HepG2 (cell line): ENCODE measurements at regions of chr2 and their contacts with region 1.

Region 1: GRCh38 chr2:86764661-86765307 is 25.9 kb downstream of the CD8A start:
- DNase-seq: peak; percentile 43
- ATAC-seq: peak; percentile 89
- H3K4me3 ChIP-seq: no peak overlapping the region
- H3K27ac ChIP-seq: no peak overlapping the region
- H3K4me1 ChIP-seq: no peaks in the 10 kb centered on the region
- H3K27me3 ChIP-seq: no peaks in the 10 kb centered on the region
- CTCF ChIP-seq: peak; percentile 76
- EP300 ChIP-seq: no peak
- POLR2A ChIP-seq: no peak
- RAD21 ChIP-seq: peak; percentile 72

Region 2: GRCh38 chr2:86518481-86518880 is 246.3 kb before region 1 on chr2:
- CTCF ChIA-PET with region 1: no interaction called
- POLR2A ChIA-PET with region 1: no interaction called
- in situ Hi-C with region 1: no loop called
- intact Hi-C with region 1: loop called (anchors 1 kb)
- DNase-seq: peak; percentile 39
- ATAC-seq: peak; percentile 90
- H3K4me3 ChIP-seq: no peak overlapping the region
- H3K27ac ChIP-seq: no peak overlapping the region
- H3K4me1 ChIP-seq: no peaks in the 10 kb centered on the region
- H3K27me3 ChIP-seq: no peaks in the 10 kb centered on the region
- CTCF ChIP-seq: peak; percentile 74
- EP300 ChIP-seq: no peak
- POLR2A ChIP-seq: no peak
- RAD21 ChIP-seq: peak; percentile 70

Region 3: DNA sequence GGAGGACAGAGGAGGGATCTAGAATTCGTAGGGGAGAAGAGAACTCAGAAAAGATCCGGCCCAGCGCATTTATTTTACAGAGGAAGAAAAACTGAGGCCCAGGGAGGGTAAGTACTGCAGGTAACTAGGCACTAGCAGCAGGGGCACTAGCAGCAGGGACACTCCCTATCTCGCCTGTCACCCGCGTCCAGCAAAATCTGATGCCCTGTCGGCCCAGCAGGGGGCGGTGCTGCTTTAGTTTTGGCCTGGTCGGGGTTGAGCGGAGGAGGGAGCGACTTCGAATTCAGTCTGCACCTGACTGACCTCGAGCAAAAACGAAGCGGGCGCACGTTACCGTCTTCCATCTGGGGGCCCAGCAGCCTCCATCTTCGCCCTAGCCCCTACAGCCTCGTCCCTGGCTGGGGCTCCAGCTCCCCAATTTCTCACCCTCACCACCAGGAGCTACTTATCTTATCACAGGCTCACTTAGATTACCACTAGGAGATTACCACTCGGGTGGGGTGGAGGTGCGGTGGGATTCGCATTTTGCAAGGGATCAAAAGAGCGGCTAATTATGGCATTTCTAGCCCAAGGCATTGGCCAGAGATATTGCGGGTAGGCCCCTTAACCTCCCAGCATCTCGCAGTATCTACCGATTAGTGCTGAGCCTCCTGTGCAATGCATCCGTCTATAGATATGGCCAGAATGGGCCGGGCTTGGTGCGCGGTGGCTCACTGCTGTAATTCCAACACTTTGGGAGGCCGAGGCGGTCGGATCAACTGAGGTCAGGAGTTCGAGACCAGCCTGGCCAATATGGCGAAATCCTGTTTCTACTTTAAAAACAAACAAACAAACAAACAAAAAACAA is 43.8 kb after region 1 on chr2:
- CTCF ChIA-PET with region 1: no interaction called
- POLR2A ChIA-PET with region 1: no interaction called
- in situ Hi-C with region 1: no loop called
- intact Hi-C with region 1: loop called (anchors 5 kb)
- DNase-seq: peak; percentile 87
- ATAC-seq: peak; percentile 96
- H3K4me3 ChIP-seq: peak overlapping the region; percentile 67 to 81 (median 73)
- H3K27ac ChIP-seq: no peak overlapping the region
- H3K4me1 ChIP-seq: peaks cover 24% of the 10 kb centered on the region
- H3K27me3 ChIP-seq: peaks cover 0 to 7% of the 10 kb centered on the region in 2 experiments; a peak in 3 of 5 replicates
- CTCF ChIP-seq: peak; percentile 99
- EP300 ChIP-seq: no peak
- POLR2A ChIP-seq: no peak
- RAD21 ChIP-seq: peak; percentile 99